GM10248 (cell line): ENCODE measurements at regions of chr1 and their contacts with region 1.

Region 1: DNA sequence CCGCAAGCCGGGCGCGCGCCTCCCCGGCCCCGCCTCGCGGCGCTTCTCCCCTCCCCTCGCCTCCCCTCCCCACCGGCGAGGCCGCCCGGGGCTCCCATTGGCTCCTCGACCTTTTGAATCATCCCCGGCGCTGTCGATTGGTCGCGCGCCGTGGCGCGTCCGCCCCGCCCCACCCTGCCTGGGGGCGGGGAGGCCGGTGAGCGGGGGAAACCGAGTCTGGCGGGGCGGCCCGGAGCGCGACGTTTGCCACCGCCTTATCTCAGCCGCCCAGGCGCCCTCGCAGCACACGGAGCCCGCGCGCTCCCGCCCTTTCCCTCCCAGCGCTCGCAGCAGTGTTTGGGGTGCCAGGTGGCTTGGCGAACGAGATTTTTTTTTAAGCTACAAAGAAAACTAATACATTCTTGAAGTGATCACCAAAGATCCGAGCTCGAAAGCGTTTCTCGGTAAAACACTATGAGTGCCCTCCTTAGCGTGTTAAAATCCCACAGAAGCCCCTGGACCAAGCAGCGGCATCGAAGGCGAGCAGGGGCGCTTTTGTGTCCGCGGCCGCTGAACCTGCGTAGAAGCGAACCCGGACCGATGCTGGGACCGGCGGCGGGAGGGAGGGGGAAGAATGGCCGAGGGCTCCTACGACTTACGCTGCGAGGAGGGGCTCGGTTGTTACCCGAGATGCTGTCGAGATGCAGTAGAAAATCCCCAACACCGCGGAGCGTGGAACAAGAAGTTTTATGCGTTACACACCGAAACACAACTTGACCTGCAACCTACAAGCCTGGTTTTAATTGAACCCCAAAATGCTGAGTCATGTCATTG is 436 bp upstream of the LBR start:
- DNase-seq: peak; percentile 96
- CTCF ChIP-seq: no peak

Region 2: GRCh38 chr1:225378880-225379279 is 49.4 kb before region 1 on chr1:
- CTCF ChIA-PET with region 1: no interaction called
- POLR2A ChIA-PET with region 1: no interaction called
- DNase-seq: no peak
- CTCF ChIP-seq: no peak

Region 3: GRCh38 chr1:225441314-225442122 is 13.2 kb after region 1 on chr1:
- CTCF ChIA-PET with region 1: interaction called, 30 read pairs
- POLR2A ChIA-PET with region 1: interaction called, 7 read pairs
- DNase-seq: no peak
- CTCF ChIP-seq: peak; percentile 29

Region 4: GRCh38 chr1:225508538-225509375 is 80.5 kb after region 1 on chr1:
- CTCF ChIA-PET with region 1: no interaction called
- POLR2A ChIA-PET with region 1: no interaction called
- DNase-seq: no peak
- CTCF ChIP-seq: no peak

Region 5: GRCh38 chr1:225617479-225617878 is 189.2 kb after region 1 on chr1:
- CTCF ChIA-PET with region 1: no interaction called
- POLR2A ChIA-PET with region 1: no interaction called
- DNase-seq: no peak
- CTCF ChIP-seq: no peak